Heart right ventricle (tissue), 16 donors: ENCODE measurements at regions of chr10 and their contacts with region 1.

Region 1: DNA sequence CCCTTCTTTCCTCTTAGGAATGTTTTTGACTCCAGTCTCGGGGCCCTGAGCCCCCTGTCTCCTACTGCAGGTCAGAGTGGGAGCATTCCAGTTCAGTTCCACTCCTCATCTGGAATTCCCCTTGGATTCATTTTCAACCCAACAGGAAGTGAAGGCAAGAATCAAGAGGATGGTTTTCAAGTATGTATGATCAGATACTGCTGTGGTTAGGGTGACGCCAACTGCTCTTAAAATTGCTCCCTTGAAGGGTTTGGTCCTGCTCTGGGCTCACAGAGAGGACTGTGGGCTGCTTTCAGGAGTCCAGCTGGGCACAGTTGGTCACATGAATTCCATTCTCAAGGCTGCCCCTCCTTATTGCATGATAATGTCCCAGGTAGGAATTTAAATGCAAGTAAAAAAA is 22.1 kb downstream of the VWA2 start:
- DNase-seq: no peak
- ATAC-seq: no peak
- H3K4me3 ChIP-seq: no peak overlapping the region
- H3K27ac ChIP-seq: peak overlapping the region in 1 of 10 donors; percentile 46
- H3K4me1 ChIP-seq: peaks cover 0 to 41% (median 25%) of the 10 kb centered on the region in 9 donors
- H3K27me3 ChIP-seq: no peaks in the 10 kb centered on the region
- CTCF ChIP-seq: no peak

Region 2: GRCh38 chr10:114181981-114182380 is 79.1 kb before region 1 on chr10:
- intact Hi-C with region 1: loop called in 2 of 10 experiments (anchors 5 to 10 kb)
- DNase-seq: peak; percentile 48 to 80
- ATAC-seq: peak; percentile 74 to 95 (median 88)
- H3K4me3 ChIP-seq: peak overlapping the region in 6 of 10 donors; percentile 4 to 39 (median 16)
- H3K27ac ChIP-seq: peak overlapping the region in 6 of 10 donors; percentile 11 to 52 (median 41)
- H3K4me1 ChIP-seq: peaks cover 0 to 13% (median 5%) of the 10 kb centered on the region in 9 donors
- H3K27me3 ChIP-seq: no peaks in the 10 kb centered on the region
- CTCF ChIP-seq: no peak

Region 3: DNA sequence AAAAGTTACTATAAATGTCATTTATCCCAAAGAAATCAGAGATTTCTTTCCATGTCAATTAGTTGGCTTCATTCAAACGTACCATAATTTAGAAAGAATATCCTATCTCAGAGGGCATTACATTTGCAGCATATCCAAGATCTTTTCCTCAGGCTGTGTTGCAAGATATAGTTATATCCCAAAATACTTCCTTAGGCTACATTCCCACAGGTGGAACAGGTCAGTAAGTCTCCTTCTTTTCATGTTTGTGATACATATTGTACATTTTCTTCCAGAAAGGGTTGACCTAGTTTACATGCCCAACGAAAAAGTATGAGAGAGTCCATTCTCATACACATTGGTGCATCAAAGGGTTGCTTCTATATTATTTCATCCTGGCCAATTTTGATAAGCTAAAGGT is 49.0 kb before region 1 on chr10:
- intact Hi-C with region 1: no loop called
- DNase-seq: no peak
- ATAC-seq: no peak
- H3K4me3 ChIP-seq: no peak overlapping the region
- H3K27ac ChIP-seq: no peak overlapping the region
- H3K4me1 ChIP-seq: no peaks in the 10 kb centered on the region
- H3K27me3 ChIP-seq: no peaks in the 10 kb centered on the region
- CTCF ChIP-seq: no peak